ENCODE measurements at regions of chr9 and their contacts with region 1.

Region 1: DNA sequence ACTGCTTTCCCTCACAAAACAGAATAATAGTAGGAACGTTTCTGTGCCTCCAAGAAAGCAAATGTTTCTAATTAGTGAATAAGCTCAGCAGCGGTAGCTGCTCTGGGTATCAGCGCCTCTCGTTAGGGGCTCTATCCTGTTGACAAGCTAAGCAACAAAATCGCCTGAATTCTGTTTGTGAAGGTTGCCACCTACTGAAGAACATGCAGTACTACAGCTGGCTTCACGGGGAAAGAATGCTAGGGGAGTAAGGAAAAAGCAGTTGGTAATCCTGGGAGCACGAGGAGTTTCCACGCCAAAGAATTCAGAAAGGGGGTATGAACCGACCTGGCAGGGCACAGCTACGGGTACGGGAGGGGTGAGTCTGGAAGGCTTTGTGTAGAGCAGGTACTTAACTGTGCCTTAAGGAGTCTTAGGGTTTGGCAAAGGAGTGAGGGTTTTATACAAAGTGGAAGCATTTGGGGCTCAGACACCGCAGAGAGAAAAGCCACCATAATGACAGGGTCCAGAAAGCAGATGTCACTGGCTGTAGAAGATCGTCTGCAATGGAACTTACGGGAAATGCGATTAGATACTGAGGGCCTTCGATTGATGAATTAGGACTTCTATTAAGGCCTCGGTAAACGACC is 171.7 kb downstream of the TTC39B start:
- DNase-seq: peak; percentile 50
- H3K4me3 Mint-ChIP-seq: no peak overlapping the region
- H3K27ac Mint-ChIP-seq: no peak overlapping the region
- H3K4me1 Mint-ChIP-seq: peaks cover 6% of the 10 kb centered on the region
- H3K27me3 Mint-ChIP-seq: no peaks in the 10 kb centered on the region

Region 2: GRCh38 chr9:14846871-14847311 is 288.4 kb before region 1 on chr9:
- CTCF ChIA-PET with region 1: interaction called, 19 read pairs
- DNase-seq: peak; percentile 76
- H3K4me3 Mint-ChIP-seq: no peak overlapping the region
- H3K27ac Mint-ChIP-seq: no peak overlapping the region
- H3K4me1 Mint-ChIP-seq: no peaks in the 10 kb centered on the region
- H3K27me3 Mint-ChIP-seq: peaks cover 8% of the 10 kb centered on the region

Region 3: DNA sequence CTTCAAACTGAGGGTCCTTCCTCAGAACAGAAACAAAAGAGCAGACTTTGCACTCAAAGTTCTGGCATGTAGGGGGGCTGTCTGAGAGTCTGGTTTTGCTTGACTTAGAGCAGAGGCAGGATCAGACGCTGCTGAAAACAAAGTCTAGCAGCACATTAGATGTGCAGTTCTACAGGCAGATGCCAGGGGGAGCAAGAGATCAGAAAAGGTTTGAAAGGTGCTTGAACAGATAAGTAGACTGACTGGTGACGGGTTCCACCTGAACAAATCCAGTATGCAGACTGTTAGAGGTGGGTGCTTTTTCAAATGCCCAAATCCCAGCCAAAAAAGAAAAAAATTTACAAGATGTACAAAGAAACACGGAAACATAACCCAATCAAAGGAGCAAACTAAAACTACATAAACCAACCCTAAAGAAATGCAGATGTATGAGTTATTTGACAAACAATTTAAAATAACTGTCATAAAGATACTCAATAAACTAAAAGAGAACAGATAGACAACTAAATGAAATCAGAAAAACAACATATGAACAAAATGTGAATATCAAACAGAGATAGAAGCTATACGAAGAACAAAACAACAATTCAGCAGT is 30.4 kb before region 1 on chr9:
- CTCF ChIA-PET with region 1: interaction called, 20 read pairs
- DNase-seq: peak; percentile 52
- H3K4me3 Mint-ChIP-seq: no peak overlapping the region
- H3K27ac Mint-ChIP-seq: no peak overlapping the region
- H3K4me1 Mint-ChIP-seq: no peaks in the 10 kb centered on the region
- H3K27me3 Mint-ChIP-seq: peaks cover 4% of the 10 kb centered on the region

Region 4: GRCh38 chr9:15155826-15156225 is 20.5 kb after region 1 on chr9:
- CTCF ChIA-PET with region 1: no interaction called
- DNase-seq: no peak
- H3K4me3 Mint-ChIP-seq: no peak overlapping the region
- H3K27ac Mint-ChIP-seq: no peak overlapping the region
- H3K4me1 Mint-ChIP-seq: no peaks in the 10 kb centered on the region
- H3K27me3 Mint-ChIP-seq: peaks cover 13% of the 10 kb centered on the region